ENCODE measurements at regions of chr12 and their contacts with region 1.

Region 1: DNA sequence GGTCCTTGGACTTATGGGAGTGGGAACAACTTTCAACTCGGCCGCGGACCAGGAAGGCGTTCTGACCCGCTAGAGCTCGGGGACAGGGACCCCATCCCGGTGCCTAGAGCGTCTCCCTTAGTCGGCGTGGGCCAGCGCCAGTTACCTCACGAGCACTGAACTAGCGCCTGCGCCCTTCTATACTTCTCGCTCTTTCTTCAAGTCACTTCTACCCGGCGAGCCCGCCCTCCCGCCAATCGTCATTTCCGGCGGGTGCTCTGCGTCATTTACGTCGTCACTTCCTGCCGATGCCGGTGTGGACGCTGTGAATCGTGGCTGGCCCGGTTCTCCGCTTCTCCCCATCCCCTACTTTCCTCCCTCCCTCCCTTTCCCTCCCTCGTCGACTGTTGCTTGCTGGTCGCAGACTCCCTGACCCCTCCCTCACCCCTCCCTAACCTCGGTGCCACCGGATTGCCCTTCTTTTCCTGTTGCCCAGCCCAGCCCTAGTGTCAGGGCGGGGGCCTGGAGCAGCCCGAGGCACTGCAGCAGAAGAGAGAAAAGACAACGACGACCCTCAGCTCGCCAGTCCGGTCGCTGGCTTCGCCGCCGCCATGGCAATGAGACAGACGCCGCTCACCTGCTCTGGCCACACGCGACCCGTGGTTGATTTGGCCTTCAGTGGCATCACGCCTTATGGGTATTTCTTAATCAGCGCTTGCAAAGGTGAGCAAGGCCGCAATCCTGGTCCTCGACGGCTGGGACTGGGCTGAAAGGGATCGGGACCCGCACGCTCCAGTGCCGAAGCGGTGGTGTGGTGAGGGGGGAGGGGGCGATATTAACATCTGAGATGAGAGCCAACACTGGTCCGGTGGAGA is at the start of gene STRAP:
- DNase-seq: peak; percentile 92 to 96
- H3K4me3 ChIP-seq: peak within 1 kb of the TSS; percentile 79 to 90 (median 86)
- H3K27ac ChIP-seq: peak within 1 kb of the TSS; percentile 96
- H3K4me1 ChIP-seq: no peaks in the 10 kb centered on the region; a peak in 1 of 7 replicates
- H3K27me3 ChIP-seq: no peaks in the 10 kb centered on the region
- CTCF ChIP-seq: no peak
- EP300 ChIP-seq: peak in 1 of 2 experiments; percentile 11; a peak in 1 of 3 replicates
- POLR2A ChIP-seq: peak; percentile 92 to 99
- RAD21 ChIP-seq: no peak
- total RNA-seq, gene STRAP: 251 and 253 TPM in 2 replicates

Region 2: DNA sequence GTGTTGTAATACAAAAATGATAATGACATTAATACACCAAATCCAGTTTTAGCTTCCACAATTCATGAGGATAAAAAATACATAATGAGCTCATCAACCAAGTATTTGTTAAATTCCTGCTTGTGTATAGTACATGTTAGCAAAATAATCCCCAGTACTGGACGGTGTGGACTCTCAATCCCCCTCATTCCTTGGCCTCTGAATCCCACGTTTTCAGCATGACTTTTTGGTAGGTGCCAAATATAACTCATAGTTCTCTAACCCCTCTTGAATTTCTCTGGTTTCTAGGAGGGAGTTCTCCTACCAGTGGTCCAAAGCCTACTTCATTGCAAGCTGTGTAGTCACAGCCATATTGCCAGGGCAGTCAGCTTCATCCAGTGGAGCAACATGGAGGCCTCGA is 51.8 kb before region 1 on chr12:
- CTCF ChIA-PET with region 1: no interaction called
- POLR2A ChIA-PET with region 1: no interaction called
- DNase-seq: no peak
- H3K4me3 ChIP-seq: no peak overlapping the region
- H3K27ac ChIP-seq: no peak overlapping the region
- H3K4me1 ChIP-seq: no peaks in the 10 kb centered on the region
- H3K27me3 ChIP-seq: no peaks in the 10 kb centered on the region
- CTCF ChIP-seq: no peak
- EP300 ChIP-seq: no peak
- POLR2A ChIP-seq: no peak
- RAD21 ChIP-seq: no peak

Region 3: DNA sequence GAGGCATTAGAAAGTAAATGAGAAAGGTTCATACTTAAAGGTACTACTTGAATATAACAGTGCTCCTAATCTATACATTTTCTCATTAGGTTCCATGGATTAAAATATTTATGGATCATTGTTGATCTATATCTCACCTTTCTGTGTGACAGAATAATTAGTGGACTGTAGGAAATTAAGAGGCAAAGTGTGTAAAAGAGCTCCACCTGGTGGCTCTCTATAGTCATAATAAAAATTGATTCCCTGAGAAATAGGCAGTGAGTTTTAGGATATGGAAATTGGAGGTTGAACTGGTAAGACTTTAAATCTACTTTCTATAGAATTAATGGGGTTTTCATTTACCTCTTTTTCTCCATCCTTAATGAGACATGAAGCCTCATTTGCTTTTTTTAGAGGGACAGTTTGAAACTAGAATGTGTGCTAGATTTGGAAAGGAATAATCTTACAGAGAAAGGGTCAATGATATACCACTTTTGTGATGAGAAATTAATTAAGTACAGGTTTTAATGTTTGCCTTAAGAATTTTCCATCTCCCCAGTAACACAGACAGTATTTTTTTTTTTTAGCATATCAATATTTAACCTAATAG is 17.0 kb after region 1 on chr12:
- CTCF ChIA-PET with region 1: interaction called, 9 read pairs
- POLR2A ChIA-PET with region 1: interaction called, 19 read pairs
- DNase-seq: no peak
- H3K4me3 ChIP-seq: no peak overlapping the region
- H3K27ac ChIP-seq: no peak overlapping the region
- H3K4me1 ChIP-seq: no peaks in the 10 kb centered on the region
- H3K27me3 ChIP-seq: no peaks in the 10 kb centered on the region
- CTCF ChIP-seq: peak in 1 of 3 experiments; percentile 44; a peak in 2 of 4 replicates
- EP300 ChIP-seq: no peak
- POLR2A ChIP-seq: no peak
- RAD21 ChIP-seq: peak; percentile 39 to 43

Region 4: GRCh38 chr12:15904378-15904920 is 22.1 kb after region 1 on chr12:
- CTCF ChIA-PET with region 1: interaction called, 9 read pairs
- POLR2A ChIA-PET with region 1: interaction called, 20 read pairs
- DNase-seq: no peak
- H3K4me3 ChIP-seq: no peak overlapping the region
- H3K27ac ChIP-seq: no peak overlapping the region
- H3K4me1 ChIP-seq: no peaks in the 10 kb centered on the region
- H3K27me3 ChIP-seq: no peaks in the 10 kb centered on the region
- CTCF ChIP-seq: no peak
- EP300 ChIP-seq: no peak
- POLR2A ChIP-seq: peak in 1 of 2 experiments; percentile 21; a peak in 1 of 3 replicates
- RAD21 ChIP-seq: no peak

Region 5: DNA sequence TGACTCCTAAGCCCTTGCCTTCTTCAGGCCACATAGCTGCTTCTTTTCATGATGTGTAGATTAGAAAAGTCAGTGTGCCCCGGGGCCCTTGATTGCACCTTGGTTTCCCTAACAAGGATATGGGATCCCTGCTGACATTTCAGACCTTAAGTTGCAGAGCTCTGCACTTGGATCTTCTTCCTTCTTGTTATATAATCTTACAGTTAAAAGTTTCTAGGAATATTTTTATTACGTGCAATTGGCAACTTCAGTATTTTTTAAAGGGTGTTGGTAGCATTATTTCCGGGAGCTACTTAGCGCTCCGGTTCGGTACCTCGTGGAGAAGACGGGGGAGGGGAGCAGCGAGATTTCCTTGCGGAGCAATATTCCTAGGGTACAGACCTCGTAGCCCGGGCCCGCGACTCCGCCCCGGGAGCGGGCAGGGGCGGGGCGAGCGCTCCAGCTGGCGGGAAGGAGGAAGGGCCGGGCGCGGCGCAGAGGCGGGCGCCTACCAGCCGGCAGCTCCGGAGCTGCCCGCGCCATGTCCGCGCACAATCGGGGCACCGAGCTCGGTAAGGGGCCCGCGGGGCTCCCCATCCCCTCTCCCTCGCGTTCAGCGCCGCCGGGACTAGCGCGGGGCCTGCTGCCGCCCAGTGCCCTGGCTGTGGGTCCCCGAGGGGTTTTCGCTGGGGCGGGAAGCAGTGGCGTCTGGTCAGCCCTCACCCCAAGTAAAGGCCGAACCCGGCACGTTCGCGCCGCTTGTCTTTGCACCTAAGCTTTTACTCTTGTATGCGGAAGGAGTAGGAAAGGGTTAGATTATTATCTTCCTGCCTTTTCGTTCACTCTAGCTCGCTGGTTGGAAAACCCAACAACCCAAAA is 28.7 kb after region 1 on chr12 and contains the start of gene DERA:
- CTCF ChIA-PET with region 1: no interaction called
- POLR2A ChIA-PET with region 1: interaction called, 20 read pairs
- DNase-seq: peak; percentile 38 to 90
- H3K4me3 ChIP-seq: peak within 1 kb of the TSS; percentile 67 to 88 (median 81)
- H3K27ac ChIP-seq: peak within 1 kb of the TSS; percentile 60; the same call in 1 of the 2 replicates
- H3K4me1 ChIP-seq: no peaks in the 10 kb centered on the region; a peak in 1 of 7 replicates
- H3K27me3 ChIP-seq: no peaks in the 10 kb centered on the region
- CTCF ChIP-seq: no peak
- EP300 ChIP-seq: no peak
- POLR2A ChIP-seq: peak; percentile 82 to 96
- RAD21 ChIP-seq: no peak
- total RNA-seq, gene DERA: 17.1 and 17.5 TPM in 2 replicates

Region 6: DNA sequence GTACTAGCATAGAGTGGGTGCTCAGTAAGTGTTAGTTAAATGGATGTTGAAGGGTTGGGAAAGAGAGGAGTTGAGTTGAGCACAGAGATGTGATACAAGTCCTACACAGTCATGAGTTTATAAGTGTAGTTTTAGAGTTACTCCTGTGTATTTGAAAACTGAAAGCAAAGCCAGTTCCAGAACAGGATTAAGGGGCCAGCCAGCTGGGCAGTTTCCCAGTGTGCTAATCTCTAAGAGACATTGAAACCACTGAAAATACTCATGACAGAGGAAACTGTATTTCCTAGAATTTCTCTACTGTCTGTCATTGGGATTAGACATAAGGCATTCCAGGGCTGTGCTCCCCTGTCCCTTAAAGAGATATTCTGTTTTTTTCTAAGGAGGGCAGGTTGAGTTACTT is 129.8 kb after region 1 on chr12:
- CTCF ChIA-PET with region 1: no interaction called
- POLR2A ChIA-PET with region 1: no interaction called
- DNase-seq: no peak
- H3K4me3 ChIP-seq: no peak overlapping the region
- H3K27ac ChIP-seq: no peak overlapping the region
- H3K4me1 ChIP-seq: no peaks in the 10 kb centered on the region
- H3K27me3 ChIP-seq: peaks cover 0 to 2% (median 0%) of the 10 kb centered on the region in 4 experiments; a peak in 1 of 7 replicates
- CTCF ChIP-seq: no peak
- EP300 ChIP-seq: no peak
- POLR2A ChIP-seq: no peak
- RAD21 ChIP-seq: no peak

Measured in H1 (cell line).